CD4-positive, alpha-beta T cell (primary cell): ENCODE measurements at regions of chr15 and their contacts with region 1.

Region 1: DNA sequence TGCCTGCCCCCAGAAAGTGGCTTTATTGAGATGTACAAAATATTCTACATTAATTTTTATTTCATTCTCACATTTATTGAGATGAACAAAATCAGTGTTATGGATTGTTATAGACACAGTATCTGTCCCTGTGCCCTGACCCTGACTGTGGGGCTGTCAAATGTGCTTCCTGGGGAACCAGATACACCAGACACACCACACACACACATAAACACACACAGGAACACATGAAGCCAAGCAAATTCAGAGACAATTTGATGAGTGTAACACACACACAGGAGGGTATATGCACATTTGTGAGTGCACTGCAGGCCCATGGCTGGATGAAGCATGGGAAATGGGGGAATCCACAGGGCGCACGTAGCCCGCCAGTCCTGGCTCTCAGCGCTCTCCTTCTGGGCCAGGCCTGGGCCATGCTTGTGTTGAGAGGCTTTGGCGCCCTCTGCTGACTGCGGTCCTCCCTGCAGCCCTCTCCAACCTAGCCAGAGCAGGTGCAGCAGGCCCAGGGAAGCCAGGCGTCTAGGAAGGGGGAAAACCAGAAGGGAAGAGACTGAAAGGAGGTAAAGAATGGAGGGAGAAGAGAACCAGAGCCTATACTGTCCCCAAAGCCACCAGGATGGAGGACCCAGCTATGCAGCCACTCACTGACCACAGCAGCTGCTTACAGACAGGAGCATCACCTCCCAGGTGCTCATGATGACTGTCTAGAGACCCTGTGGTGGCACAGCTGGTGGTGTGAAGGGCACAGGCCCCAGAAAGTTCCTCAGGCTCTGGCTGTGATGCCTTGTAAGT is 18.0 kb upstream of the LOXL1 start:
- DNase-seq: peak; percentile 58 to 82 (median 67)
- ATAC-seq: peak; percentile 97
- H3K4me3 ChIP-seq: no peak overlapping the region
- H3K4me3 Mint-ChIP-seq: no peak overlapping the region
- H3K27ac ChIP-seq: no peak overlapping the region
- H3K27ac Mint-ChIP-seq: no peak overlapping the region
- H3K4me1 ChIP-seq: no peaks in the 10 kb centered on the region
- H3K4me1 Mint-ChIP-seq: no peaks in the 10 kb centered on the region
- H3K27me3 ChIP-seq: no peaks in the 10 kb centered on the region
- H3K27me3 Mint-ChIP-seq: no peaks in the 10 kb centered on the region
- CTCF ChIP-seq: peak; percentile 84

Region 2: DNA sequence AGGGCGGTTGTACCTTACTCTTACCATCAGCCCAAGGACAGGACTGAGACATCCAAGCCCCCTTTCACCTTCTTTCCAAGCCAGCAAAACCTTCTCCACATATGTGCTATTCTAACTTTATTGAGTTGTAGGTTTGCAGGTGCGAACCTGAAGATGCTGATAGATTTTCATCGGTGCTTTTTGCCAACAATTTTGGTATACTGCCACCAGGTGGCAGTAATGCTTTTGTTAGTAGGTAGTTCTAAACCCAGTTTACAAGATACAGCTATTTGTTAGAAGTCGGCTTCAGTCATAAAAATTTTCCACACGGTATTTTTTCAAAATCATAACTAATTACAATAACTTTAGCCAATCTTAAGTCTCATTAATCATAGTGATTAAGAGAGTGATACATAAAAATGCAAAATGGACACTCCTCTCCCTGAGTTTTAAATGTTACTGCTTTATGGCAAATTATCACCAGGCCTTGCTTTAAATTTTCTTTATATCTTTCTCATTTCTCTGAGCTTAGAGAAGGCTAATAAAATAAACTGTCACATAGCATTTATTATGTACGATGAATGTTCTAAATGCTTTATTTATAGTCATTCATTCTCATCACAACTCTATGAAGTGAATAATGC is 34.2 kb before region 1 on chr15:
- CTCF ChIA-PET with region 1: interaction called, 3 read pairs
- POLR2A ChIA-PET with region 1: interaction called, 4 read pairs
- intact Hi-C with region 1: loop called (anchors 1 kb)
- DNase-seq: peak in 8 of 14 experiments; percentile 4 to 72 (median 26)
- ATAC-seq: no peak
- H3K4me3 ChIP-seq: no peak overlapping the region
- H3K4me3 Mint-ChIP-seq: no peak overlapping the region
- H3K27ac ChIP-seq: no peak overlapping the region
- H3K27ac Mint-ChIP-seq: no peak overlapping the region
- H3K4me1 ChIP-seq: no peaks in the 10 kb centered on the region
- H3K4me1 Mint-ChIP-seq: no peaks in the 10 kb centered on the region
- H3K27me3 ChIP-seq: peaks cover 18 to 24% of the 10 kb centered on the region in 2 experiments
- H3K27me3 Mint-ChIP-seq: peaks cover 49% of the 10 kb centered on the region
- CTCF ChIP-seq: peak; percentile 81